Common myeloid progenitor, CD34-positive (primary cell): ENCODE measurements at regions of chr19 and their contacts with region 1.

Region 1: GRCh38 chr19:55632463-55632834 is 8.1 kb upstream of the ZNF784 start:
- DNase-seq: peak; percentile 96 to 99 (median 97)
- H3K4me3 ChIP-seq: no peak overlapping the region
- H3K27ac ChIP-seq: no peak overlapping the region
- H3K4me1 ChIP-seq: peaks cover 5 to 36% (median 27%) of the 10 kb centered on the region in 4 experiments
- H3K27me3 ChIP-seq: no peaks in the 10 kb centered on the region

Region 2: DNA sequence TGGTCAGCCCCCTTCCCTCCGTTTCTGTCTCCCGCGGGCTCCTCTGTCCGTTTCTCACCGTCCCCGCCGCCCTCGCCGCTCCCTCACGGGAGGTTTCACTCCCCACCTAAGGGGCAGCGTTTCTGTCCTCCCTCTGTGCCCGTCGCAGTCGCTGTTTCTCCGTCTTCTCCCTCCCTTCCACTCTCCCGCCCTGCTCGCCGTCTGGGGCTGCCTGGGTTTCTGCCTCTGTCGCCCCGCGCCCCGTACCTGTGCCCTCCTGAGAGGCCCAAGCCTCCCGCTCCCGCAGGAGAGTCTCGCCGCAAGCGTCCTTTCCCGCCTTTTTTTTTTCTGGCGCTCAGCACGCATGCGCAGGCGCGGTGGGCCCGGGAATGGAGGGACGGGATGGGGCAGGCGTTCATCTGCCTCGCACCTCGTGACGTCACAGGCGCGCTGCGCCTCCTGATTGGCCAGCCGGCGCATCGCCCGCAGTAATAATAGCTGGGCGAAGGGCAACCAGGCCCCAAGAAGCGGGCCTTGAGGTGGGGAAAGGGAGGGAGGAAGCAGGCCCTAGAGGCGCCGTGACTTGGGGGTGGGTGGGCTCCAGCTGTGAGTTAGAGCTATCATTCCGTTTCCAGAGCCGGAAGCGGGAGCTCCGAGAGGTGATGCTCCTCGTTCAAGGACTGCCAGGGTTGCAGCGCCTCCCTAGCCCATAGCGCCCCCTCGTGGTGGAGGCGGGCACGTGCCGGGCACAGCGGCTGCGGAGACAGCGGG is 128.8 kb before region 1 on chr19:
- CTCF ChIA-PET with region 1: interaction called, 12 read pairs
- POLR2A ChIA-PET with region 1: no interaction called
- DNase-seq: peak; percentile 92 to 94 (median 93)
- H3K4me3 ChIP-seq: peak overlapping the region in 6 of 7 experiments; percentile 37 to 76 (median 56)
- H3K27ac ChIP-seq: peak overlapping the region in 1 of 2 experiments; percentile 14
- H3K4me1 ChIP-seq: peaks cover 0 to 10% (median 7%) of the 10 kb centered on the region in 4 experiments
- H3K27me3 ChIP-seq: peaks cover 0 to 2% (median 0%) of the 10 kb centered on the region in 5 experiments

Region 3: DNA sequence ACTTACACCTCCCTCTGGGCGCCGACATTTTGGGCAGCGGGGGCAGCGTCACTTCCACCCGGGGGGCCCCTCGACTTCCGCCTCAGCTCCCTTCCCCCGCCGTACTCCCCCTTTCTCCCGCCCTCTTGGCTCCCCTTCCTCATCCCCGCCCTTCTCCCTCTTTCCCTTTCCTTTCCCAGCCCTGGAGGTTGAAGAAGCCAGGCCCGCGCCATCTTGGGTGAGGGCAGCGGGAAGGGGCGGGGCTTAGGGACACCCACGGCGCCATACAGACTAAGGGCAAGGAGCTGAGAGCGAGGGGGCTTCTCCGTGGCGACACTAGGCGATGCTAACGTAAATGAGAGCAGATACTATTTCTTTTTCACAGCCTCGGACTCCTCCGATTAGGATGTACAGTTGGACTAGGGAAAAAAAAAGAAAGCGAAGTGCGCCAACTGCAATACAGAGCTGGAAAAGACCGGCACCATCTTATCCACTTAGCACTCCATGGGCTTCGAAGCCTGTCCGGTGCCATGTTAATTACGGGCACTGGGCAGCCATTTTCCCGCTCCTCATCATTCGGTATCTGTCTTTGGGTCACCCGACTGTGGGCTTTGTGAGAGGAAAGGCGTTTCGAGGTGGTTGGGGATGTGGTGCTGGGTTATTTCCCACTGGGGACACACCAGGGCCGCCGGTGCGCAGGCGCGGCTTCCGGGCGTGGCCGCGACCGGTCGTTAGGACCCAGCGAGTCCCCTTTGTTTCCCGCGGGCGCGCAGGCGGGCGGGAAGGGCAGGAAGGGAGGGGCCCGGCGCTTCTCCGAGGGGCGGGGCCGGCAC is 32.8 kb before region 1 on chr19 and contains the start of gene FIZ1:
- CTCF ChIA-PET with region 1: interaction called, 12 read pairs
- POLR2A ChIA-PET with region 1: interaction called, 5 read pairs
- DNase-seq: peak; percentile 99 to 100 (median 100)
- H3K4me3 ChIP-seq: peak within 1 kb of the TSS; percentile 89 to 98 (median 95)
- H3K27ac ChIP-seq: peak within 1 kb of the TSS; percentile 93 to 95
- H3K4me1 ChIP-seq: peaks cover 0 to 30% (median 22%) of the 10 kb centered on the region in 4 experiments
- H3K27me3 ChIP-seq: no peaks in the 10 kb centered on the region

Region 4: DNA sequence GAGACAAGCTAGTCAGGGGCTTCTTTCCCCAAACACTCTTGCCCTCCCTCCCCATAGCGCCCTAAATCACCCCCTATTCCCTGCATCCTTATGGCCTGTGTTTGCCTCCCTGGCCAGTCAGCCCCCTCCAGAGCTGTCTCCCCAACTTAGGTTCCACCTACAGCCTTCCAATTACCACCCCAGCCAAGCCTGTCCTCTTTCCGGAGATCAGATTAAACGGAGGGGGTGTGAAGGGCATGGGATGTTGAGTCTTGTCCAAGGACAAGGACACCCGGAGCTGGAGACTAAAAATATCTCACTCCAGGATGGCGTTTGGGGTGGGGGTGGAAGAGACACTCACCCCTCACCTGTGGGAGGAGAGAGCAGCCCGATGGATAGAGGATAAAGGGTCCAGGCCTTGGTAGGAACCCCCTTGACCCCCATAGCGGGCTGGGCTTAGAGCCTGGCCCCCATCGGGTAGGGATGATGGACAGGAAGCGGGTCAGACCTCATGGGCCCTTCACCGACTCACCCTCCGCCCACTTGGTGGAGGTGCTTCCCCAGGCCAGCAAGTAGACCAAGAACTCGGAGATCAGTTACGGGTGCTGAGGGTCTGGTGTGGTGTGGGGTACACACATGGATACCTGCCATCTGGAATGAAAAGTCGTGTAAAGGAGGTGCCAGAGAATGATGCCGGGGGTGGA is 21.0 kb before region 1 on chr19:
- CTCF ChIA-PET with region 1: interaction called, 27 read pairs
- POLR2A ChIA-PET with region 1: interaction called, 7 read pairs
- DNase-seq: no peak
- H3K4me3 ChIP-seq: no peak overlapping the region
- H3K27ac ChIP-seq: no peak overlapping the region
- H3K4me1 ChIP-seq: peaks cover 0 to 8% (median 5%) of the 10 kb centered on the region in 4 experiments
- H3K27me3 ChIP-seq: no peaks in the 10 kb centered on the region

Region 5: DNA sequence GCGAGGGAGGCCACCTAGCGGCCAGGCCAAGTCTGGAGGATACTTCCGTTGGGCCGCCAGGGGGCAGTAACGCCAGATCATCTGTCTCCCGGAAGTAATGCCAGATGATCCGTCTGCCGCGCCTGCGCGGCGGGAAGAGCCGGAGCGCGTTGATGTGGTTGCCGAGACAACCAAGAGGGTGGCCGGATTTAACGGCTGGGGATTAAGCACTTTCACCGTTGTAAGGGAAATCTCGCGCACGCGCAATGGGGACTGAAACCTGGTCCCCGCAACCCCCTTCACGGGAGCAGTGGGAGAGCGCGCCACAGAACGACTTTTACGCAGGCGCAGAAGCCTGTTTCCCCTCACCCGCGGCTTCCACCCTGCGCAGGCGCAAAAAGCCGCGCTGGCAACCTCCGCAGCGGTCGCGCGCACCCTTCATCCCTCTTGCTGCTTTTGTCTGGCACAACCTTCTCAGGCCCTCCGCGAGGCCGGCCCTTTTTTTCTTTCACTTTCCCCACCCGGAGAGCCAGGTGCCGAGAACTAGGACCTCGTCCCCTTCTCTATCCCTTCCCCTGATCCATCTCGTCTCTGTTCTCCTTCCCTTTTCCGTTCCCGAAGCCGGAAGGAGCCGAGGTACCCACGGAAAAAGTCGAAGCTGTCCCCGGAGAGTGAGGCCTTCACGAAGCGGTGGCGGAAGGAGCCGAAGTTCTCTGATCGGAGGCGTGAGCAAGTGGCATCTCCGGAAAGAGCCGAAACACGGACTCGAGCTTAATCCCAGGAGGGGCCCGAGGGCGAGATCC is 21.5 kb after region 1 on chr19:
- CTCF ChIA-PET with region 1: interaction called, 128 read pairs
- POLR2A ChIA-PET with region 1: no interaction called
- DNase-seq: peak; percentile 99 to 100 (median 100)
- H3K4me3 ChIP-seq: peak overlapping the region; percentile 74 to 95 (median 87)
- H3K27ac ChIP-seq: peak overlapping the region; percentile 96 to 99
- H3K4me1 ChIP-seq: peaks cover 18 to 46% (median 40%) of the 10 kb centered on the region in 4 experiments
- H3K27me3 ChIP-seq: no peaks in the 10 kb centered on the region

Region 6: DNA sequence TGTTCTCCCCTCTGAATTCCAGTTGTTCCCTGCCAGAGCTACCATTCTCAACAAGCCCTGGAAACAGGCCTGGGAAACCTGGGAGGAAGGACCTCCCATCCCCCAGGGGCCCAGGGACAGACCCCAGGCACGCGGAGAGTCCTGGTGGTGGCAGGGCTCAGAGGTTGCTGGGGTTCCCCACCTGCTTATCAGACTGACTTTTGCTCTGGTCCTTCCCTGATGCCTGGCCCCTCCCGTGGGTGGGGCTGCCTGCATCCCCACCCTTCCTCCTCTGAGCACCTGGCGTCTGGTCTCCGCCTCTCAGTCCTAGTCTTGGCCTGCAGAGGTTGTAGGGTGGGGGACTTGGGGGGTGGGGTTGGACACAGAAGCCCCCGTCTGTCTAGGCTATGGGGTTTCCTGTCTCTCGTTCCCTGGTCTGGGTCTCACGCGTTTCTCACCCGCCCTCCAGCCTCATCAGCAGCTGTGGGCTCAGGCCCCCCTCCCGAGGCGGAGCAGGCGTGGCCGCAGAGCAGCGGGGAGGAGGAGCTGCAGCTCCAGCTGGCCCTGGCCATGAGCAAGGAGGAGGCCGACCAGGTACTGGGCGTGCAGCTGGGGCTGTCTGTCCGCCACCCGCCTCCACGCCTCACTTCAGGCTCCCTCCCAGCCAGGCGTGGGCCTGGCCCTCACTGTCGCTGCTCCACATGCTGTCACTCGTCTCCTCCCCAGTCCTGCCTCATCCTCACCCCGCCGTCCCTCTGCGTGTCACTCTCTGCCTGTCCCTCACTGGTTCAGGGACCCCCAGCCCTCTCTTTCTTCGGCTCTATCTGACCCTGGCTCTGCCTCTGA is 56.2 kb after region 1 on chr19:
- CTCF ChIA-PET with region 1: no interaction called
- POLR2A ChIA-PET with region 1: no interaction called
- DNase-seq: no peak
- H3K4me3 ChIP-seq: no peak overlapping the region
- H3K27ac ChIP-seq: no peak overlapping the region
- H3K4me1 ChIP-seq: no peaks in the 10 kb centered on the region
- H3K27me3 ChIP-seq: no peaks in the 10 kb centered on the region

Region 7: GRCh38 chr19:55801416-55801815 is 169.0 kb after region 1 on chr19:
- CTCF ChIA-PET with region 1: no interaction called
- POLR2A ChIA-PET with region 1: no interaction called
- DNase-seq: no peak
- H3K4me3 ChIP-seq: no peak overlapping the region
- H3K27ac ChIP-seq: no peak overlapping the region
- H3K4me1 ChIP-seq: no peaks in the 10 kb centered on the region
- H3K27me3 ChIP-seq: peaks cover 0 to 2% (median 0%) of the 10 kb centered on the region in 5 experiments